ENCODE measurements at regions of chr3 and their contacts with region 1.

Region 1: GRCh38 chr3:42118762-42119361 is 27.7 kb downstream of the TRAK1 start:
- DNase-seq: peak; percentile 85
- ATAC-seq: peak; percentile 79
- H3K4me3 ChIP-seq: no peak overlapping the region
- H3K27ac ChIP-seq: 0 out of 2 replicates have a peak overlapping the region, but pooled peaks have one; percentile 3
- H3K4me1 ChIP-seq: peaks cover 33% of the 10 kb centered on the region
- H3K27me3 ChIP-seq: no peaks in the 10 kb centered on the region
- CTCF ChIP-seq: peak; percentile 86

Region 2: GRCh38 chr3:41418961-41419691 is 699.7 kb before region 1 on chr3:
- CTCF ChIA-PET with region 1: no interaction called
- POLR2A ChIA-PET with region 1: no interaction called
- intact Hi-C with region 1: no loop called
- DNase-seq: peak; percentile 67
- ATAC-seq: peak; percentile 87
- H3K4me3 ChIP-seq: no peak overlapping the region
- H3K27ac ChIP-seq: peak overlapping the region; percentile 21
- H3K4me1 ChIP-seq: peaks cover 15% of the 10 kb centered on the region
- H3K27me3 ChIP-seq: no peaks in the 10 kb centered on the region
- CTCF ChIP-seq: peak; percentile 37

Region 3: DNA sequence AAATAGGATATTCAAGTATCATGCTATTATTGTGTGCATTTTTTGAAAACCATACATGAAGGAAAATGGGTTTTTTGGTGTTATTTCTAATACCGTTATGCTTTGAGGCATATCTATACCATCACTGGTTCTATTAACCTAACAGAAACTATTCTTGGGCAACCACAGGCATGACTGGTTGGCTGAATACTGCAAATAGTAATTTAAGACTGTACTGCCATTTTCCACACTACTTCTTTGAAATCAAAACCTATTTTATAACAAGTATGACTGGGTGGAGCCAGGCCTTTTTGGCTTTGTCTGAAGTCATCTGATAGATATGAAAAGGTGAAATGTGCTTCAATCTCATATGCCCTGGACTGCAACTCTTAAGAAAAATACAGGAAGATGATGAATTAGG is 272.0 kb before region 1 on chr3:
- CTCF ChIA-PET with region 1: no interaction called
- POLR2A ChIA-PET with region 1: no interaction called
- intact Hi-C with region 1: no loop called
- DNase-seq: no peak
- ATAC-seq: no peak
- H3K4me3 ChIP-seq: no peak overlapping the region
- H3K27ac ChIP-seq: no peak overlapping the region
- H3K4me1 ChIP-seq: peaks cover 3% of the 10 kb centered on the region; the same call in 1 of the 2 replicates
- H3K27me3 ChIP-seq: no peaks in the 10 kb centered on the region
- CTCF ChIP-seq: no peak

Region 4: GRCh38 chr3:42149532-42150426 is 30.9 kb after region 1 on chr3:
- CTCF ChIA-PET with region 1: interaction called, 6 read pairs
- POLR2A ChIA-PET with region 1: no interaction called
- intact Hi-C with region 1: loop called (anchors 2 kb)
- DNase-seq: peak; percentile 96
- ATAC-seq: peak; percentile 77
- H3K4me3 ChIP-seq: peak overlapping the region; percentile 27; the same call in 1 of the 2 replicates
- H3K27ac ChIP-seq: peak overlapping the region; percentile 85
- H3K4me1 ChIP-seq: peaks cover 41% of the 10 kb centered on the region
- H3K27me3 ChIP-seq: no peaks in the 10 kb centered on the region
- CTCF ChIP-seq: no peak

Region 5: GRCh38 chr3:42184651-42185443 is 66.0 kb after region 1 on chr3:
- CTCF ChIA-PET with region 1: interaction called, 12 read pairs
- POLR2A ChIA-PET with region 1: no interaction called
- intact Hi-C with region 1: no loop called
- DNase-seq: peak; percentile 88
- ATAC-seq: peak; percentile 100
- H3K4me3 ChIP-seq: no peak overlapping the region
- H3K27ac ChIP-seq: peak overlapping the region; percentile 73
- H3K4me1 ChIP-seq: peaks cover 36% of the 10 kb centered on the region
- H3K27me3 ChIP-seq: no peaks in the 10 kb centered on the region
- CTCF ChIP-seq: no peak

Region 6: DNA sequence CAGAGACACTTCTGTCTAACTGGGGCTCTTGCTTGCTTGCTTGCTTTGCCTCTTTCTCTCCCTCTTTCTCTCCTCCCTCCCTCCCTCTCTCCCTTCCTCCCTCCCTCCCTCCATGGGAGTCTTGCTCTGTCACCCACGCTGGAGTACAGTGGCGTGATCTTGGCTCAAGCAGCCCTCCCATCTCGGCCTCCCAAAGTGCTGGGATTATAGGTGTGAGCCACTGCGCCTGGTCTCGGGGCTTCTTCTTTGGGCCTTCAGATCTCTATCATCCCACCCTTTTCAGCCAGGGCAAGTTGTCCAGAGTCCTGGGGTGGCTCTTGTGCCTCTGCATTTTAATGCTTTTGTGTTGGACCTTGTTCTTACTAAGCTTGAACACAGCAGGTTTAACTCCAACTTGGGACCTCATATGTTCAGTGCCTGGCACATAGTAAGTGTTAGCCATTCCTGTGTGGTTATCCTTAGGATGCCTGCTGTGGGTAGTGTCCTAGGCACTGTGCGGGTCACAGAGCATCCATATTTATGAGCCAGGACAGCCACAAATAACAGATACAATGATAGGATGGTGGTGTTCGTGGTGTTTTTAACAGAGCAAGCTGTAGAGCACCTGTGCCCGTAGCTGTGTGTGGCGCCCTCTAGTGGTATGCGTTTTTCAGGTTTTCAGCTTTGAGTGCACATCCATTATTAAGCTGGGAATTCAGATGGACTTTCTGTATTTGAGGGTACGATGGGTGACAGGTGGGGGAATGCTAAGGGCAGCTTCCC is 72.0 kb after region 1 on chr3:
- CTCF ChIA-PET with region 1: interaction called, 37 read pairs
- POLR2A ChIA-PET with region 1: no interaction called
- intact Hi-C with region 1: loop called (anchors 1 kb)
- DNase-seq: peak; percentile 90
- ATAC-seq: peak; percentile 94
- H3K4me3 ChIP-seq: no peak overlapping the region
- H3K27ac ChIP-seq: no peak overlapping the region
- H3K4me1 ChIP-seq: no peaks in the 10 kb centered on the region
- H3K27me3 ChIP-seq: no peaks in the 10 kb centered on the region
- CTCF ChIP-seq: peak; percentile 97

Region 7: GRCh38 chr3:42443819-42444436 is 325.1 kb after region 1 on chr3:
- CTCF ChIA-PET with region 1: interaction called, 4 read pairs
- POLR2A ChIA-PET with region 1: no interaction called
- intact Hi-C with region 1: loop called (anchors 2 kb)
- DNase-seq: peak; percentile 93
- ATAC-seq: peak; percentile 100
- H3K4me3 ChIP-seq: no peak overlapping the region
- H3K27ac ChIP-seq: no peak overlapping the region
- H3K4me1 ChIP-seq: no peaks in the 10 kb centered on the region
- H3K27me3 ChIP-seq: peaks cover 19% of the 10 kb centered on the region
- CTCF ChIP-seq: peak; percentile 98

Region 8: GRCh38 chr3:42490243-42490642 is 371.4 kb after region 1 on chr3:
- CTCF ChIA-PET with region 1: no interaction called
- POLR2A ChIA-PET with region 1: no interaction called
- intact Hi-C with region 1: no loop called
- DNase-seq: peak; percentile 96
- ATAC-seq: peak; percentile 100
- H3K4me3 ChIP-seq: no peak overlapping the region
- H3K27ac ChIP-seq: peak overlapping the region; percentile 67
- H3K4me1 ChIP-seq: peaks cover 24% of the 10 kb centered on the region
- H3K27me3 ChIP-seq: no peaks in the 10 kb centered on the region
- CTCF ChIP-seq: no peak

Region 9: DNA sequence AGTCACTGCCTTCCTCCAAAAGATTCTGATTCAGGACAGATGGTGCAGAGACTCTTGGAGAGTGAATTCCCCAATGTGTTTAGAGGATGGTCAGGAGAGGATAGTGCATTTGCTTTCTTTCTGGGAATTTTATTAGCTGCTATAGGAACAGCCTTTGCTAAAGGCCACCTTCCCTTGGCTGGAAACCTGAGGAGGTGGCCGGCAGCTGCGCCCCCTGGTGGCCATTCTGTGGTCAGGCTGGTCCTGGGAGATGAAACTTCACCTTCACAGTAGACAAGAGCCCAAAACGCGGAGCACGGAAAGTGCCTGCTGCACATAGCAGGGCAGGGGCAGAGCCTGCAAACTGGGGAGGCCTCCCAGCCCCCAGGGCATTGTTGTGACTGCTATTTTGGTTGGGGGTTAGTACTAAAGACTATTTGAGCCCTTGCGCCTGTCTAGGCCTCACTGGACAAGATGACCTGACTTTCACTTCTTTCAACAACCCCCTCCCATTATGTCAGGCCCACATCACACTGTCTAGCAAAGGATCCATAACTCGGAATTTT is 428.6 kb after region 1 on chr3:
- CTCF ChIA-PET with region 1: no interaction called
- POLR2A ChIA-PET with region 1: no interaction called
- intact Hi-C with region 1: loop called (anchors 5 kb)
- DNase-seq: peak; percentile 76
- ATAC-seq: peak; percentile 61
- H3K4me3 ChIP-seq: no peak overlapping the region
- H3K27ac ChIP-seq: no peak overlapping the region
- H3K4me1 ChIP-seq: peaks cover 15% of the 10 kb centered on the region
- H3K27me3 ChIP-seq: no peaks in the 10 kb centered on the region
- CTCF ChIP-seq: peak; percentile 98